K562 (cell line): ENCODE measurements at regions of chr6 and their contacts with region 1.

Region 1: GRCh38 chr6:116714761-116715160 is 33.8 kb downstream of the KPNA5 start:
- DNase-seq: no peak
- ATAC-seq: no peak
- H3K4me3 ChIP-seq: no peak overlapping the region
- H3K27ac ChIP-seq: no peak overlapping the region
- H3K4me1 ChIP-seq: no peaks in the 10 kb centered on the region
- H3K27me3 ChIP-seq: no peaks in the 10 kb centered on the region
- CTCF ChIP-seq: no peak
- EP300 ChIP-seq: no peak
- POLR2A ChIP-seq: no peak
- RAD21 ChIP-seq: no peak

Region 2: DNA sequence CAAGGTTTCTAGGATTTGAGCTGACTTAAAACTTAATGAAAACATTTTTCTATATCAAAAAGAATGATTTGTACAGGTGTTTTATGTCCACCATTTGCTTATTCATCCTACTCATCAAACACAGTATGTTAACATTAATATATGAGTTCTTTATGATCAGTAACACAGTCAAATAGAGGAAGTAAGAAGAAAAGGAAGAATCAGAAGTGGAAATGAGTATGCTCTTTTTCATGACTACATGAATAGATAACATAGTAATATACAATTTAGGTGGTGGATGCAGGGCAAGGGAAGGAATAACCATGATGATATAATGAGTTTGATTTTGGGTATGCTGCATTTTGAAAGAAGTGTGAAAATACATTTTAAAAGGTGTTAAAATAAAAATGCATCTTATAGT is 17.3 kb before region 1 on chr6:
- CTCF ChIA-PET with region 1: no interaction called
- POLR2A ChIA-PET with region 1: interaction called, 3 read pairs
- in situ Hi-C with region 1: no loop called
- intact Hi-C with region 1: loop called (anchors 1 kb)
- DNase-seq: no peak
- ATAC-seq: no peak
- H3K4me3 ChIP-seq: no peak overlapping the region
- H3K27ac ChIP-seq: no peak overlapping the region
- H3K4me1 ChIP-seq: no peaks in the 10 kb centered on the region
- H3K27me3 ChIP-seq: no peaks in the 10 kb centered on the region
- CTCF ChIP-seq: no peak
- EP300 ChIP-seq: no peak
- POLR2A ChIP-seq: no peak
- RAD21 ChIP-seq: no peak

Region 3: GRCh38 chr6:116730513-116730912 is 15.8 kb after region 1 on chr6:
- CTCF ChIA-PET with region 1: no interaction called
- POLR2A ChIA-PET with region 1: no interaction called
- in situ Hi-C with region 1: no loop called
- intact Hi-C with region 1: no loop called
- DNase-seq: no peak
- ATAC-seq: no peak
- H3K4me3 ChIP-seq: no peak overlapping the region
- H3K27ac ChIP-seq: no peak overlapping the region
- H3K4me1 ChIP-seq: no peaks in the 10 kb centered on the region
- H3K27me3 ChIP-seq: no peaks in the 10 kb centered on the region
- CTCF ChIP-seq: no peak
- EP300 ChIP-seq: no peak
- POLR2A ChIP-seq: no peak
- RAD21 ChIP-seq: no peak